Body of pancreas (tissue), 4 donors: ENCODE measurements at regions of chr12 and their contacts with region 1.

Region 1: GRCh38 chr12:47781479-47782371 is 8.7 kb downstream of the SLC48A1 start:
- DNase-seq: no peak
- ATAC-seq: no peak
- H3K4me3 ChIP-seq: no peak overlapping the region
- H3K27ac ChIP-seq: no peak overlapping the region
- H3K4me1 ChIP-seq: peaks cover 9% of the 10 kb centered on the region
- H3K27me3 ChIP-seq: no peaks in the 10 kb centered on the region
- CTCF ChIP-seq: no peak
- POLR2A ChIP-seq: no peak

Region 2: GRCh38 chr12:47686645-47687240 is 95.0 kb before region 1 on chr12:
- intact Hi-C with region 1: no loop called
- DNase-seq: no peak
- ATAC-seq: no peak
- H3K4me3 ChIP-seq: no peak overlapping the region
- H3K27ac ChIP-seq: no peak overlapping the region
- H3K4me1 ChIP-seq: no peaks in the 10 kb centered on the region
- H3K27me3 ChIP-seq: no peaks in the 10 kb centered on the region
- CTCF ChIP-seq: peak in 6 of 7 experiments; percentile 35 to 56 (median 44)
- POLR2A ChIP-seq: no peak

Region 3: DNA sequence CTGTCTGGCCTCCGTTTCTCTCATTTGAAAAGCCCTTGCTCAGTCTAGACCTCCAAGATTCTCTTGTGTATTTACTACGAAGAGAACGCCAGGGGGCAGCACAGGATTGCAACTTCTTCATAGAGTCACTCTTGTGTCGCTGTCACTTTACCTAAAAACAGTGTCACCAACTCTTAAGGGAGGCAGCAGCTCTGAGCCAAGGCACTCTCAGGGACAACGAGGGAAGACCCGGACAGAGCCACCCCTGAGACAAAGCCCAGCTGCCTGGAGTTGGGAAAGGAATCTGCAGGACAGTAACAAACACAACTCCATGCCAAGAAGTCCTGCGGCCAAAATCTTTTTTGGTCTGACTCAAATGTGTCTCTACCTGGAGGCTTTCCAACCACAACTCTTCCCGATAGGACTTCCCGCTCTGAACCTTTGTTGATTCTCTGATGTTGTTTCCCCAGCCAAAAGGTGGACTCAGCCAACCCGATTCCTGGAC is 66.3 kb before region 1 on chr12:
- intact Hi-C with region 1: loop called (anchors 5 kb)
- DNase-seq: peak; percentile 83 to 88 (median 86)
- ATAC-seq: peak; percentile 76
- H3K4me3 ChIP-seq: no peak overlapping the region
- H3K27ac ChIP-seq: peak overlapping the region in 2 of 4 donors; percentile 22 to 24
- H3K4me1 ChIP-seq: peaks cover 27% of the 10 kb centered on the region
- H3K27me3 ChIP-seq: no peaks in the 10 kb centered on the region
- CTCF ChIP-seq: peak; percentile 63 to 91 (median 81)
- POLR2A ChIP-seq: no peak

Region 4: GRCh38 chr12:47837190-47838171 is 55.8 kb after region 1 on chr12:
- intact Hi-C with region 1: loop called (anchors 5 kb)
- DNase-seq: peak; percentile 72 to 75 (median 74)
- ATAC-seq: peak; percentile 83
- H3K4me3 ChIP-seq: no peak overlapping the region
- H3K27ac ChIP-seq: no peak overlapping the region
- H3K4me1 ChIP-seq: peaks cover 8% of the 10 kb centered on the region
- H3K27me3 ChIP-seq: no peaks in the 10 kb centered on the region
- CTCF ChIP-seq: peak; percentile 61 to 89 (median 86)
- POLR2A ChIP-seq: no peak